A673 (cell line): ENCODE measurements at regions of chr14 and their contacts with region 1.

Region 1: DNA sequence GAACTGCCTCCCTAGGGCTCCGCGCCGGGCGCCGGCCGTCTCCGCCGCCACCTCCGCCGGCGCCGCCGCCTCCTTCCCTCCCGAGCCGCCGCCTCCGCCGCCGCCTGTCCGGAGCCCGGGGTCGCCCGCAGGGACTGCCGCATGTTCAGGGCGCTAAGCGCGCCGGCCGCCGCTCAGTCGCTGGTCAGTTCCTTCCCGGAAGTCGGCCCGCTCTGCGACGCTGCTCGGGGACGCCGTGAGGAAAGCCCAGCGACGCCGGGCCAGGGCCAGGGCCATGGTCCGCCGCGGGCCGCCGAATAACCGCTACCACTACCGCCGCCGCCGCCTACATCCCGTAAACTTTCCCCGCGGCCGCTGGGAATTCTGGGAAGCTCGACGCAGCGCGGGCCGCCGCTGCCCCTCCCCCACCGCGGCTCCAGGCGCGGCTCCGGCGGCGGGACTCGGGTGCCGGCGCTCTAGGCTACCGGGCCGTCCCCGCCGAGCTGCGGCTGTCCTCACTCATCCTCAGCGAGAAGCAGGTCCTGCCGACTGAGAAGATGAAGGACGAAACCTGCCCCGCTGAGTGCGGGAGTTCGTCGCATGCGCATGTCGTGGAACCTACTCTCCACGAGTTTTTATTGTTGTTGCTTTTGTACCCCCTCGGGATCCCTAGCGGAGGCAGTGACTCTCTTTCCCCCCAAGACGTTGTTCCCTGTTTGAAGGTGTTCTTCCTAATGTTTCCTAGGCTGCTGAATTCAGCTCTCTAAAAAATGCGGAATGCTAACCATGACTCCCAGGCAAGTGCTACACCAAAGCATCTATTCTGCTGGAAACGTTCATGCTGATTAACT is at the start of gene SAV1:
- DNase-seq: peak; percentile 87
- H3K4me3 ChIP-seq: peak within 1 kb of the TSS; percentile 90
- H3K27ac ChIP-seq: peak within 1 kb of the TSS; percentile 96
- H3K4me1 ChIP-seq: peaks cover 25% of the 10 kb centered on the region
- H3K27me3 ChIP-seq: no peaks in the 10 kb centered on the region
- CTCF ChIP-seq: no peak
- total RNA-seq, gene SAV1: 35.2 and 36.5 TPM in 2 replicates

Region 2: GRCh38 chr14:49206828-49207227 is 1461.4 kb before region 1 on chr14:
- CTCF ChIA-PET with region 1: no interaction called
- POLR2A ChIA-PET with region 1: no interaction called
- intact Hi-C with region 1: no loop called
- DNase-seq: no peak
- H3K4me3 ChIP-seq: no peak overlapping the region
- H3K27ac ChIP-seq: no peak overlapping the region
- H3K4me1 ChIP-seq: no peaks in the 10 kb centered on the region
- H3K27me3 ChIP-seq: peaks cover 16% of the 10 kb centered on the region
- CTCF ChIP-seq: no peak

Region 3: DNA sequence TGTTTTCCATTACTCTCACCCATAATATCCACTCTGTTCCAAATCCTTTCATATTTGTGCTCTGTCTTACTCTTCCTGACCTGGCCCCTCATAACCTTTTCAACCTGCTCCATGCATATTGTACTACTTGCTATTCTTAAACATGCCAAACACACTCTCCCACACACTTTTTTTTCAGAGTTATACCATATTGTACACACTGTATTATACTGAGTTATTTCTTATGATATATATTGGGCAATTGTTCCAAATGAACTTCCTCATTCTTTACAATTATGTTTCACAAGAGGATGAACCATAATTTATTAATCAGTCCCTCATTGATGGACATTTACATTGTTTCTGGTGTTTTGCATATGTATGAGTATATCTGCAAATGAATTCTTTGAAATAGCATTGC is 89.8 kb before region 1 on chr14:
- CTCF ChIA-PET with region 1: no interaction called
- POLR2A ChIA-PET with region 1: interaction called, 14 read pairs
- intact Hi-C with region 1: no loop called
- DNase-seq: no peak
- H3K4me3 ChIP-seq: no peak overlapping the region
- H3K27ac ChIP-seq: no peak overlapping the region
- H3K4me1 ChIP-seq: peaks cover 11% of the 10 kb centered on the region
- H3K27me3 ChIP-seq: no peaks in the 10 kb centered on the region
- CTCF ChIP-seq: no peak

Region 4: GRCh38 chr14:50656776-50657175 is 11.4 kb before region 1 on chr14:
- CTCF ChIA-PET with region 1: no interaction called
- POLR2A ChIA-PET with region 1: interaction called, 14 read pairs
- intact Hi-C with region 1: no loop called
- DNase-seq: no peak
- H3K4me3 ChIP-seq: no peak overlapping the region
- H3K27ac ChIP-seq: peak overlapping the region; percentile 83
- H3K4me1 ChIP-seq: peaks cover 31% of the 10 kb centered on the region
- H3K27me3 ChIP-seq: no peaks in the 10 kb centered on the region
- CTCF ChIP-seq: no peak

Region 5: GRCh38 chr14:50860478-50861086 is 192.4 kb after region 1 on chr14:
- CTCF ChIA-PET with region 1: no interaction called
- POLR2A ChIA-PET with region 1: no interaction called
- intact Hi-C with region 1: no loop called
- DNase-seq: peak; percentile 91
- H3K4me3 ChIP-seq: peak overlapping the region; percentile 49
- H3K27ac ChIP-seq: peak overlapping the region; percentile 20
- H3K4me1 ChIP-seq: no peaks in the 10 kb centered on the region
- H3K27me3 ChIP-seq: no peaks in the 10 kb centered on the region
- CTCF ChIP-seq: peak; percentile 76